ENCODE measurements at regions of chr20 and their contacts with region 1.

Region 1: GRCh38 chr20:6636209-6637159 is 131.0 kb upstream of the BMP2 start:
- DNase-seq: no peak
- ATAC-seq: peak; percentile 87
- H3K4me3 ChIP-seq: no peak overlapping the region
- H3K27ac ChIP-seq: no peak overlapping the region
- H3K4me1 ChIP-seq: peaks cover 0 to 2% of the 10 kb centered on the region in 2 donors
- H3K27me3 ChIP-seq: no peaks in the 10 kb centered on the region

Region 2: GRCh38 chr20:6265204-6265904 is 371.1 kb before region 1 on chr20:
- intact Hi-C with region 1: loop called in 1 of 2 experiments (anchors 2 kb)
- DNase-seq: no peak
- ATAC-seq: peak; percentile 67
- H3K4me3 ChIP-seq: peak overlapping the region in 1 of 2 donors; percentile 72
- H3K27ac ChIP-seq: no peak overlapping the region
- H3K4me1 ChIP-seq: no peaks in the 10 kb centered on the region
- H3K27me3 ChIP-seq: no peaks in the 10 kb centered on the region

Region 3: DNA sequence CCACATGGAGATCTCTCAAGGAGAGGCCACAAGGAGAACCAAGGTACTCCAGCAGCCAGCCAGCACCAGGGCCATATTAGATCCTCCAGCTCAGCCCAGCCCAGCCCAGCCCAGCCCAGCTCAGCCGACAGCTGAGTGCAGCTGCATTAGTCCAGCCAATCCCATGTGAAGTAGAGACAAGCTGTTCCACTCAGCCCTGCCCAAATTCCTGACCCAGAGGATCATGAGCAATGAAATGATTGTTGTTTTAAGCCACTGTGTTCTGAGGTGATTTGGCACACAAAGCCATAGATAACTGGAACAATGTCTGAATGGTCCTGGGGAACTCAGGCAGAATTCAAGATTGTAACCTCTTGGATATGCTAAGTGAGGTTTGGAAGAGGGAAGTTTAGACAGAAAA is 71.5 kb after region 1 on chr20:
- intact Hi-C with region 1: loop called in 1 of 2 experiments (anchors 5 kb)
- DNase-seq: peak; percentile 52 to 84
- ATAC-seq: peak; percentile 49
- H3K4me3 ChIP-seq: no peak overlapping the region
- H3K27ac ChIP-seq: no peak overlapping the region
- H3K4me1 ChIP-seq: peaks cover 2 to 6% of the 10 kb centered on the region in 2 donors
- H3K27me3 ChIP-seq: no peaks in the 10 kb centered on the region

Region 4: GRCh38 chr20:6767536-6768227 is 131.2 kb after region 1 on chr20 and contains the start of gene BMP2:
- intact Hi-C with region 1: loop called (anchors 2 to 5 kb)
- DNase-seq: peak; percentile 51 to 87
- ATAC-seq: peak; percentile 77
- H3K4me3 ChIP-seq: peak within 1 kb of the TSS; percentile 89 to 94
- H3K27ac ChIP-seq: peak within 1 kb of the TSS in 1 of 2 donors; percentile 20
- H3K4me1 ChIP-seq: no peaks in the 10 kb centered on the region
- H3K27me3 ChIP-seq: no peaks in the 10 kb centered on the region
- total RNA-seq, gene BMP2: 3.5 to 15.9 TPM

Region 5: GRCh38 chr20:6819605-6820004 is 183.1 kb after region 1 on chr20:
- intact Hi-C with region 1: loop called (anchors 5 to 10 kb)
- DNase-seq: no peak
- ATAC-seq: no peak
- H3K4me3 ChIP-seq: no peak overlapping the region
- H3K27ac ChIP-seq: no peak overlapping the region
- H3K4me1 ChIP-seq: no peaks in the 10 kb centered on the region
- H3K27me3 ChIP-seq: no peaks in the 10 kb centered on the region

Region 6: GRCh38 chr20:6828794-6829423 is 192.4 kb after region 1 on chr20:
- intact Hi-C with region 1: loop called in 1 of 2 experiments (anchors 10 kb)
- DNase-seq: peak in 1 of 2 donors; percentile 59
- ATAC-seq: peak; percentile 79
- H3K4me3 ChIP-seq: no peak overlapping the region
- H3K27ac ChIP-seq: no peak overlapping the region
- H3K4me1 ChIP-seq: no peaks in the 10 kb centered on the region
- H3K27me3 ChIP-seq: peaks cover 0 to 1% of the 10 kb centered on the region in 2 donors